Activated CD4-positive, alpha-beta T cell treated with anti-CD3 and anti-CD28 coated beads, Interleukin-2, amount 10 ng/mL, durations not matched to agents 24 days and 14 days (primary cell): ENCODE measurements at regions of chr3 and their contacts with region 1.

Region 1: GRCh38 chr3:101381809-101382208 is 61.4 kb upstream of the IMPG2 start:
- DNase-seq: no peak
- H3K4me3 Mint-ChIP-seq: no peak overlapping the region
- H3K27ac Mint-ChIP-seq: no peak overlapping the region
- H3K4me1 Mint-ChIP-seq: peaks cover 27% of the 10 kb centered on the region
- H3K27me3 Mint-ChIP-seq: no peaks in the 10 kb centered on the region

Region 2: GRCh38 chr3:100400780-100401673 is 980.8 kb before region 1 on chr3 and contains the starts of genes LNP1 and TOMM70:
- intact Hi-C with region 1: loop called (anchors 10 kb)
- DNase-seq: peak; percentile 98
- H3K4me3 Mint-ChIP-seq: peak within 1 kb of the TSS; percentile 93
- H3K27ac Mint-ChIP-seq: peak within 1 kb of the TSS; percentile 98
- H3K4me1 Mint-ChIP-seq: peaks cover 36% of the 10 kb centered on the region
- H3K27me3 Mint-ChIP-seq: no peaks in the 10 kb centered on the region
- total RNA-seq, gene LNP1: 2.1 and 2.6 TPM in 2 replicates
- total RNA-seq, gene TOMM70: 57.4 and 61.5 TPM in 2 replicates

Region 3: DNA sequence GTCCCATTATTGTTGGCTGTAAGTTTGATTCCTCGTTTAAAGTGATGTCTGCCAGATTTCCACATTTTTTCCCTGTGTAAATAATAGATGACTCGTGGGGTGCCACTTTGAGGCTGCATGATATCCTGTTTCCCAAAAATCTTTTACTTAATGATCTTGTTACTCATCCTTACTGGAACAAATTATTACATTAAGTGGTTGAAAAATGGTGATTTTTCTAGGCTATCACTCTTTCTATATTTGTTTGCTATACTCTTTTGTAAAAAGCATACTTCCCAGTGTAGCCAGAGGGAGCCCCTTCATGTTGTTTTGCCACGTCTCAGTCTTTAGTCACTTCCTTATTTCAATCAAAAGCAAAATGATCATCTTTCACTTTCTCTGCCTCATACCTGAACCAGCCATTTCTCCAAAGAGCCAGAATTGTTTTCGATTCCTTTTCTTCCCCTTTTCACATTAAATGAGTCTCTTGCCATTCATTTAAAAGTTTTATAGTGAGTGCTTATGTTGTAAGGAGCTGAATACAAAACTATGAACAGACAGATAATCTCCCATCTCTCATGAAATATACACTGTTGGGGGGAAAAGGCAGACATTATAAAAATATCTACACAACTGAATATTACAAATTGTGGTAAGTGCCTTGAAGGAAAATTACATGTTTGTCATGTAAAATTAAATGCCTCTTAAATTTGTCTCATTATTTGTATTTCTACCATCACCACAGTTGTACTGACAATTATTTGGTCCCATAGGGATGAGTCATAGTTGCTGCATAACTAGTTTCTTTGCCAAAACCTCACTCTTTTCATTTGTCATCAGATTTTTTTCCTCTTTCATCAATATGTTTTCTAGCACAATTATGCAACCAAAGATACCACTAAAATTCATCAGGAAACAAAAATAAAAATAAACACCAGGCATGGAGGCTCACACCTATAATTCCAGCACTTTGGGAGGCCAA is 730.9 kb before region 1 on chr3:
- intact Hi-C with region 1: loop called (anchors 2 kb)
- DNase-seq: peak; percentile 73
- H3K4me3 Mint-ChIP-seq: peak overlapping the region; percentile 58
- H3K27ac Mint-ChIP-seq: peak overlapping the region; percentile 75
- H3K4me1 Mint-ChIP-seq: peaks cover 12% of the 10 kb centered on the region
- H3K27me3 Mint-ChIP-seq: peaks cover 2% of the 10 kb centered on the region

Region 4: DNA sequence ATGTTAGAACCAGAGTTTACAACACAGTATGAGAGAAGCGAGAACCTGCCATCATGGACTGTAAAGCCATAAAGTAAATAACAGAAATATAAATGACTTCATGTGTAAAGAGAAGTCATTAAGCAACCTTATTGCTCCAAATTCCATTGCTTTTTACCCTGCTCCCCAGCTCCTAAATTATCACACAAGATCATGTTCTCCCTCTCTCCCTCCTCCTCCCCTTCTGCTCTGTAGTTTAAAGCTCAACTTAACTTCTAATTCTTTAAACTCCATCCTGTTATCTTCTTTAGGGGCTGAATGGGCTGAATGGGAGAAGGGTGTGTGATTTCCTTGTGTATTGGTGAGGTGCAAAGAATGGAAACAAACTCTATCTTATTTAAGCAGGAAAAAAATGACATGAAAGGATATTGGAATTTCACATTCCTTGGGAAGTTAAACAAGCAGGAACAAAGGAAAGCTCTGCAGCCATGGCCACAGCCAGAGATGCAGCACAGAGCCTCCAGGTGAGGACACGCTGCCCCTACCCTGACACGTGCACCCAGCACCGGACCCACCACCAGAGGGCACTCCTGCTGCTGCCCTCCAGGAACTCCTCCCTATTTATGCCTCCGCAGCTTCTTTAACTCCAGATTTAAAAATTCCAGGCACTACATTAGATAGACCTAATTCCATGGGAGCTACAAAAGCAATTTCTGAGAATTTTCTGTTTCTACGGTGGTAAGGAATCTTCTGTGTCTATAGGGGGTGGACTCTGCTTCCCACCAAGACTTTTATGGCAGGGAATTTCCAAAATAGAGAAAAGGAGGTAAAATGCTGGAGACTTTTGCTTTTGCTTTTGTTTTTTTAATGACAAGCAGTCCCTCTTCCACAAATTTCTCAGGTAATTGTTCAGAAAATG is 311.7 kb before region 1 on chr3:
- intact Hi-C with region 1: loop called (anchors 1 kb)
- DNase-seq: peak; percentile 86
- H3K4me3 Mint-ChIP-seq: no peak overlapping the region
- H3K27ac Mint-ChIP-seq: no peak overlapping the region
- H3K4me1 Mint-ChIP-seq: peaks cover 2% of the 10 kb centered on the region
- H3K27me3 Mint-ChIP-seq: peaks cover 25% of the 10 kb centered on the region

Region 5: DNA sequence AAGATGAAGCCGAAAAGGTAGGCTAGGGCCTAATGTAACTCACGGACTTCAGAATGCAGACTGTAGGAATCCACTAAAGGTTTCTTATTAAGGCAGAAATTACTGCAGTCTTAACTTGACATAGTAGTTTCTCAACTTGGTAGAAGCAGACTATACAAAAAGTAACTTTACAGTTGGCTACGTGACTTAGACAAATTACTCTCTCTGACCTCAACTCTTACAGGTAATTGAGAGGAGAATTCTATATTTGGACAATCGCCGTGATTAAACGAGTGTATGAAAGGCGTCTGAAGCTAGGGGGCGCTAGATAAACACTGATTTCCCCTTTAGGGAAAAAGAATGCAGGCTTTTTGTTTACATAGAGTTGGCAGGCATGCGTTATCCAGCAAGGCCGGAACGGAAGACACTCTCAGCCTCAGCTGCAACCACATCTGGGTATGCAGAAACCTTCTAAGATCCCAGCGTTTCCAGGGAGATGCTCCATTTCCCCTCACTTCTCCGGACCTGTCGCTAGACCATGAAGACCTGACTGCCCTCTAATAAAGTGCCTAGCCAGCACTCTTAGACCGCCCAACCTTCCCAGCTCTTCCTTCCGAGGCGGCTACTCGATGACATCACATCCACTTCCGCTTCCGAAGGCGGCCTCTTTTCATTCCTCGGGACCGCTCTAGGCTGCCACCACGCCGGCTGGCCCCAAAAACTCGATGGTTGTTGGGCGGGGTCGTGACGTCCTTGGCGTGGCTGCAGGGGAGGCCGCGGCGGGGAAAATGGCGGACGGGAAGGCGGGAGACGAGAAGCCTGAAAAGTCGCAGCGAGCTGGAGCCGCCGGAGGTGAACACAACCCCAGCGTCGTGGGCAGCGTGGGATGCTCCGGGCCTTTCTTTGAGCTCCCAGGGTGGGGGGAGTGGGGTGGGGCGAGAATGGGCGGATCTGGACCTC is 191.9 kb after region 1 on chr3 and contains the start of gene PCNP:
- intact Hi-C with region 1: loop called (anchors 5 kb)
- DNase-seq: peak; percentile 100
- H3K4me3 Mint-ChIP-seq: peak within 1 kb of the TSS; percentile 94
- H3K27ac Mint-ChIP-seq: peak within 1 kb of the TSS; percentile 95
- H3K4me1 Mint-ChIP-seq: peaks cover 46% of the 10 kb centered on the region
- H3K27me3 Mint-ChIP-seq: no peaks in the 10 kb centered on the region
- total RNA-seq, gene PCNP: 190 and 205 TPM in 2 replicates